PC-3 (cell line): ENCODE measurements at regions of chr13 and their contacts with region 1.

Region 1: GRCh38 chr13:23020223-23020843 is 160.4 kb upstream of the SGCG start:
- DNase-seq: peak; percentile 66
- ATAC-seq: peak; percentile 82
- H3K4me3 ChIP-seq: no peak overlapping the region
- H3K27ac ChIP-seq: no peak overlapping the region
- H3K4me1 ChIP-seq: no peaks in the 10 kb centered on the region
- H3K27me3 ChIP-seq: peaks cover 5% of the 10 kb centered on the region; the same call in 1 of the 2 replicates
- CTCF ChIP-seq: peak; percentile 74

Region 2: DNA sequence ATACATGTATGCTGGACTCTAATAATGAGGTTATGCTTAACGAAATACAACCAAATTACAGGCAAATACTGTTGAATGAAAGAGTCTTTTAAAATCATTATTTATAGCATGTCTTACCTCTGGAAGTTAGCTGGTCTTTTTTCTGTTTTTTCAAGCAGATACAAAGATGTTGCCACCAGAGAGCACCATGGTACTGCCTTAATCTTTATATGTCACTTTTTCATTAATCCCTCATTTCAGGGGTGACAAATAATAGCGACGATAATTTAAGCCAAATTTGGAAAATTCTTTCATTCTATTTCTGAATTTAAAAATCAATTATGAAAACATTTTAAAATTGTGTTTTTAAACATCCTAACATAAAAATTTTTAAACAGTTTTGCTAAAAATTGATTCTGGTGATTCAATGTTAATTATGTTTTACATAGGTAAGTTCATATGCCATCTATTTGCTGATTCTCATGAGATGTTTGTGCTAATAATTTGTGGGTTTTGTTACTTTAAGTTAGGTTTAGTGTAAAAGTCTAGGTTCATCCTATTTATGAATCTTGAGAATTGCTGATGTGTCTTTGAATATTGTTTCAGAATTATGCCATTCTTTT is 218.8 kb before region 1 on chr13:
- CTCF ChIA-PET with region 1: interaction called, 13 read pairs
- POLR2A ChIA-PET with region 1: no interaction called
- intact Hi-C with region 1: loop called (anchors 1 kb)
- DNase-seq: no peak
- ATAC-seq: no peak
- H3K4me3 ChIP-seq: no peak overlapping the region
- H3K27ac ChIP-seq: no peak overlapping the region
- H3K4me1 ChIP-seq: no peaks in the 10 kb centered on the region
- H3K27me3 ChIP-seq: peaks cover 26% of the 10 kb centered on the region; the same call in 1 of the 2 replicates
- CTCF ChIP-seq: peak; percentile 38; the same call in 1 of the 2 replicates

Region 3: GRCh38 chr13:23074075-23074828 is 53.9 kb after region 1 on chr13:
- CTCF ChIA-PET with region 1: no interaction called
- POLR2A ChIA-PET with region 1: no interaction called
- intact Hi-C with region 1: no loop called
- DNase-seq: no peak
- ATAC-seq: no peak
- H3K4me3 ChIP-seq: no peak overlapping the region
- H3K27ac ChIP-seq: no peak overlapping the region
- H3K4me1 ChIP-seq: no peaks in the 10 kb centered on the region
- H3K27me3 ChIP-seq: peaks cover 26% of the 10 kb centered on the region
- CTCF ChIP-seq: no peak

Region 4: GRCh38 chr13:23107665-23108064 is 87.3 kb after region 1 on chr13:
- CTCF ChIA-PET with region 1: no interaction called
- POLR2A ChIA-PET with region 1: no interaction called
- intact Hi-C with region 1: no loop called
- DNase-seq: no peak
- ATAC-seq: no peak
- H3K4me3 ChIP-seq: no peak overlapping the region
- H3K27ac ChIP-seq: no peak overlapping the region
- H3K4me1 ChIP-seq: no peaks in the 10 kb centered on the region
- H3K27me3 ChIP-seq: peaks cover 57% of the 10 kb centered on the region
- CTCF ChIP-seq: no peak

Region 5: DNA sequence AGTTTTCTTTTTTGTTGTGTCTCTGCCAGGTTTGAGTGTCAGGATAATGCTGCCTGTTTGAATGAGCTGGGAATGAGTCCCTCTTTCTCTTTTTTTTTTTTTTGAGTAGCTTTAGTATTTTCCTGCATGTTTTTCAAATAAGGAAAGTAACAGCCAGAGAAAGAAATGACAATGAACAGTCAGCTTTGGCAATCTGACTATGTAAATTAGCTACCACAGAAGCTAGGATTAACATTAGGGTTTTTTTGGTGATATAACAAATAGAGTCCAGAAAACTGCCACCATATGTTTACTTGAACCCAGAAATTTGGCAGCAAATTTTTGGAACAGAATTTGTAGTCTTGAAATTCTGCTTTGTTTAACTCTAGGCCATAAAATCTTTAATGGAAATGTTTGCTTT is 210.9 kb after region 1 on chr13:
- CTCF ChIA-PET with region 1: no interaction called
- POLR2A ChIA-PET with region 1: no interaction called
- intact Hi-C with region 1: no loop called
- DNase-seq: no peak
- ATAC-seq: no peak
- H3K4me3 ChIP-seq: no peak overlapping the region
- H3K27ac ChIP-seq: no peak overlapping the region
- H3K4me1 ChIP-seq: no peaks in the 10 kb centered on the region
- H3K27me3 ChIP-seq: peaks cover 30% of the 10 kb centered on the region; the same call in 1 of the 2 replicates
- CTCF ChIP-seq: no peak